ENCODE measurements at regions of chr12 and their contacts with region 1.

Region 1: GRCh38 chr12:108950991-108951739 is 69.7 kb downstream of the SVOP start:
- DNase-seq: peak; percentile 46
- ATAC-seq: peak; percentile 82
- H3K4me3 Mint-ChIP-seq: no peak overlapping the region
- H3K27ac Mint-ChIP-seq: no peak overlapping the region
- H3K4me1 Mint-ChIP-seq: peaks cover 7% of the 10 kb centered on the region
- H3K27me3 Mint-ChIP-seq: peaks cover 8% of the 10 kb centered on the region
- CTCF ChIP-seq: peak; percentile 97

Region 2: GRCh38 chr12:107992870-107993451 is 958.2 kb before region 1 on chr12:
- CTCF ChIA-PET with region 1: no interaction called
- POLR2A ChIA-PET with region 1: no interaction called
- intact Hi-C with region 1: loop called (anchors 2 kb)
- DNase-seq: no peak
- ATAC-seq: peak; percentile 31
- H3K4me3 Mint-ChIP-seq: no peak overlapping the region
- H3K27ac Mint-ChIP-seq: no peak overlapping the region
- H3K4me1 Mint-ChIP-seq: no peaks in the 10 kb centered on the region
- H3K27me3 Mint-ChIP-seq: peaks cover 29% of the 10 kb centered on the region
- CTCF ChIP-seq: no peak

Region 3: DNA sequence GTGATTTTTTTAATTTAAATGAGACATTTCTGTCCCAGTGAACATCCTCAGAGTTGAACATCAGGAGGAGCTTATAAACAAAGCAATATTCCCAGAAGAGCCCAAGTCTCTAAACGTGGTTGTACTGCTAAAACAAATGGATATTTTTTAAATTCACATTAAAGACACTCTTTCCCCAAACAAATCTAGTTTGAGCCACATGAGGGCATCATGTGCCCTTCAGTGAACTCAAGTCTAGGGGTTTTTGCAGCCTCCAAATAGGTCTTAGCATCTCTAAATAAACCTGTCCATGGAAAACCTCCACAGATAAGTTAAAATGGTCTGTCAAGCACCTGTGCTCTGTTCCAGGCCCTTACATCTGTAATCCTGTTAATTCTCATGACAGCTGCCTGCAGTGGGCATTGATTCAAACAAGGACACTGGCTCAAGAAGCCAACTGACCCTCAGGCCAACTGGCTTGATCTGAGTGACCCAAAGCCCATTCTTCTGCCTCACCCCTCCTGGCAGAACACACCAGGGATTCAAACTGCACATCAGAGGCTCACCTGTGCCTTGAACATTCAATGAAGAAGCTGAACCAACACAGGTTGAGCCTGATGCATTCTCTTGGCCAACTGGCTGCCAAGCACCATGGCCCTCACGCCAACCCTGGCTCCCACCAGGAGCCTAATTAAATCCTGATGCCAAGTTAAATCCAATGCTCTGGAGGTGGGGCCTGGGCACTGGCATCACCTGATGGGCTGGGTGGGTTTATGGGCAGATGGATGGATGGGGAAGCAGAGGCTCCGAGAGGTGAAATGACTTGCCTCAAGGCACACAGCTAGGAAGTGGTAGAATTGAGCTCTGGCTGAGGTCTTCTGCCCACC is 380.2 kb before region 1 on chr12:
- CTCF ChIA-PET with region 1: interaction called, 5 read pairs
- POLR2A ChIA-PET with region 1: interaction called, 6 read pairs
- intact Hi-C with region 1: loop called (anchors 1 kb)
- DNase-seq: no peak
- ATAC-seq: no peak
- H3K4me3 Mint-ChIP-seq: no peak overlapping the region
- H3K27ac Mint-ChIP-seq: peak overlapping the region; percentile 97
- H3K4me1 Mint-ChIP-seq: peaks cover 87% of the 10 kb centered on the region
- H3K27me3 Mint-ChIP-seq: no peaks in the 10 kb centered on the region
- CTCF ChIP-seq: no peak

Region 4: DNA sequence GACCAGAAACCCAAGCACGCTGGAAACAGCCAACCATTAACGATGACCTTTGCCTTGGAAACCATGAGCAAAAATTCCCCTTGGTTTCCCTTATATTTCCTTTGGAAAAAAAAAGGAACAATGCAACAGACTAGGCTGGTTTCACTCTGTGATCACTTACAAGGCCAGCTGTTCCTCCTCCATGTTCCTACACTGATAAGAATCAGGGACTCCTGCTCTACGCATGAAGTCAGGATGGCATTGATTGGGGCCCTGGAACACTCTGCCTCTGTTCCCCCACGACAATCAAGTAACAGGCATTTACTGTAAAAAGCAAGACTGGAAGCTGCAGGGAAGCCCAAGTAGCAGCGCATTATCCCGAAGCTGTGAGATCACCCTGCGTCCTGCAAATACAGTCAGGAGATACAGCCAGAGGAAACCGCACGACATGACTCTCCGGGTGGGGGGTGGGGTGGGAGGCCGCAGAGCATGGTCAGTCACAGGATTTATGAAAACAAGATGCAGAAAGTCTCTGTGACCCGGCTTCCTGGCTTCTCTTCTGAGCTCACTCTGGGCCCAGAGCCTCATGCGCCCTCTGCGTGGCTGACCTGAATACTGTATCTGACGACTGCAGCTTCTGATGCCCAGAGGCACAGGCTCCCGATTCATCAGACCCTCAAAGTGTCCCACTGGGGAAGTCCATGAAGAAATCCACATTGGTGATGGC is 124.9 kb before region 1 on chr12:
- CTCF ChIA-PET with region 1: interaction called, 4 read pairs
- POLR2A ChIA-PET with region 1: no interaction called
- intact Hi-C with region 1: loop called (anchors 1 kb)
- DNase-seq: no peak
- ATAC-seq: peak; percentile 66
- H3K4me3 Mint-ChIP-seq: peak overlapping the region; percentile 44
- H3K27ac Mint-ChIP-seq: peak overlapping the region; percentile 66
- H3K4me1 Mint-ChIP-seq: peaks cover 48% of the 10 kb centered on the region
- H3K27me3 Mint-ChIP-seq: no peaks in the 10 kb centered on the region
- CTCF ChIP-seq: no peak

Region 5: DNA sequence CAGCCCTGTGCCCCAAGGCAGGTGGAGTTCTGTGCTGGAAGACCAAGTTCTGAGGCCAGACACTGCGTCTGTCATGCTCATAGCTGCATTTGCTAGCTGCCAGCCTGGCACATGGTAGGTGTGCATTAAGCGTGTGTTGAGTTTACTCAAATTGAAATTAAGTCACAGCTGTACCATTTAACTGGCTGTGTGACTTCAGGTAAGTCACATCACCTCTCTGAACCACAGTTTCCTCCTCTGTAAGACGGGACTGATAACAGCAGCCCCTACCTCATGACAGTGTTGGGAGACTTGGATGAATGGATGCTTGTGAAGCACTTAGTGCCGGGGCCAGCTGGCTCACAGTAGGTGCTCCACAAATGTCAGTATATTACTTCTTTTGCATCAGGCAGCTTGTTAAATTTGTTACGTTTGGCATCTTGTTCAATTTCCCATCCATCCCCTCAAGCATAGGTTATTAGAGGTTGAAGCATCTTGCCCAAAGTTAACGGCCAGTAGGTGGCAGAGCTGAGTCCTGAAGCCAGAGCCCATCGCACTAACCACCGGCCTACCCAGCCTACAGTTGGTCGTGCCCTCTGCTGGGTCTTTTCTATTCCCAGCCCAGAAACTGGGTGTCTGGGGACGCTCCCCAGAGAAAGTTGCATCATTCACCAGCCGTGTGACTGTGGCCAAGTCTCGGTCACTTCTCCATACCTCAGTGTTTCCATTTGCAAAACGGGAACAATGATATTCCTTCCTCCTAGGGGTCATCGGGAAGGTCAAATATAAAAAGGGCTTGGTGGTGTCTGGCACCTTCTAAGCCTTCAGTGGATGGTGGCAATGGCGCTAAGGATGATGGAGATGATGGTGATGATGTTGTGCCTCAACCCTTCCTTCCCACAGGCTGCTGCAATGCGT is 66.8 kb before region 1 on chr12:
- CTCF ChIA-PET with region 1: interaction called, 75 read pairs
- POLR2A ChIA-PET with region 1: no interaction called
- intact Hi-C with region 1: loop called (anchors 1 kb)
- DNase-seq: peak; percentile 43
- ATAC-seq: peak; percentile 89
- H3K4me3 Mint-ChIP-seq: no peak overlapping the region
- H3K27ac Mint-ChIP-seq: no peak overlapping the region
- H3K4me1 Mint-ChIP-seq: no peaks in the 10 kb centered on the region
- H3K27me3 Mint-ChIP-seq: no peaks in the 10 kb centered on the region
- CTCF ChIP-seq: no peak

Region 6: DNA sequence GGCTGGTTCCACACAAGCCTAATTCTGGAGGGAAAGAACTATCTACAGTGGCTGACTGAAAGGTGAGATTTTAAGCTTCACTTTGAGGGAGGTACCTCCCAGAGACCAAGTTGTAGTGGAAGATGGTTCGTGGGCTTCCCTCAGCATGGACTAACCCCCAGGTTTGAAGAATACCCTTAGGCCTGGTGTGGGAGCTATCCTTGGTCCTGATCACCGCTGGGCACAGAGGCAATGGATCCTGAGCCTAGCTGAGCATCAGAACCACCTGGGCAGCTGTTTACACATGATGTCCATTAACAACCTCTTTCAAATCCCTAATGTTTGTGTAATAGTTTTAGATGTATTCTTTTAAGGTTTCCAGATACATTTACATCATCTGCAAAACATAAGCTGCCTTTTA is 61.0 kb before region 1 on chr12:
- CTCF ChIA-PET with region 1: interaction called, 75 read pairs
- POLR2A ChIA-PET with region 1: no interaction called
- intact Hi-C with region 1: no loop called
- DNase-seq: no peak
- ATAC-seq: no peak
- H3K4me3 Mint-ChIP-seq: no peak overlapping the region
- H3K27ac Mint-ChIP-seq: no peak overlapping the region
- H3K4me1 Mint-ChIP-seq: no peaks in the 10 kb centered on the region
- H3K27me3 Mint-ChIP-seq: no peaks in the 10 kb centered on the region
- CTCF ChIP-seq: no peak

Region 7: DNA sequence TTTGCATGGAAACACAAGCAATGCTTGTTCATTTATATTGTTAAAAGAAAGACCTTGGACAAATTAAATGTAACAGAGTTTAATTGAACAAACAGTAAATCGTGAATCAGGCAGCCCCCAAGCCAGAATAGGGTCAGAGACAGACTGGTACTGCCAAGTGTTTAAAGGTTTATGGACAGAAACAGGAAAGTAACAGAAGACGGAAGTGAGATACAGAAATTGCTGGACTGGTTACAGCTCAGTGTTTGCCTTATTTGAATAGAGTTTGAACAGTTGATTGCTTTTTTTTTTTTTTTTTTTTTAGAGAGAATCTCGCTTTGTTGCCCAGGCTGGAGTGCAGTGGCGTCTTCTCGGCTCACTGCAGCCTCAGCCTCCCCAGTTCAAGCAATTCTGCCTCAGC is 21.0 kb before region 1 on chr12:
- CTCF ChIA-PET with region 1: interaction called, 8 read pairs
- POLR2A ChIA-PET with region 1: no interaction called
- intact Hi-C with region 1: loop called (anchors 1 kb)
- DNase-seq: no peak
- ATAC-seq: peak; percentile 88
- H3K4me3 Mint-ChIP-seq: peak overlapping the region; percentile 33
- H3K27ac Mint-ChIP-seq: peak overlapping the region; percentile 43
- H3K4me1 Mint-ChIP-seq: peaks cover 20% of the 10 kb centered on the region
- H3K27me3 Mint-ChIP-seq: no peaks in the 10 kb centered on the region
- CTCF ChIP-seq: no peak

Region 8: DNA sequence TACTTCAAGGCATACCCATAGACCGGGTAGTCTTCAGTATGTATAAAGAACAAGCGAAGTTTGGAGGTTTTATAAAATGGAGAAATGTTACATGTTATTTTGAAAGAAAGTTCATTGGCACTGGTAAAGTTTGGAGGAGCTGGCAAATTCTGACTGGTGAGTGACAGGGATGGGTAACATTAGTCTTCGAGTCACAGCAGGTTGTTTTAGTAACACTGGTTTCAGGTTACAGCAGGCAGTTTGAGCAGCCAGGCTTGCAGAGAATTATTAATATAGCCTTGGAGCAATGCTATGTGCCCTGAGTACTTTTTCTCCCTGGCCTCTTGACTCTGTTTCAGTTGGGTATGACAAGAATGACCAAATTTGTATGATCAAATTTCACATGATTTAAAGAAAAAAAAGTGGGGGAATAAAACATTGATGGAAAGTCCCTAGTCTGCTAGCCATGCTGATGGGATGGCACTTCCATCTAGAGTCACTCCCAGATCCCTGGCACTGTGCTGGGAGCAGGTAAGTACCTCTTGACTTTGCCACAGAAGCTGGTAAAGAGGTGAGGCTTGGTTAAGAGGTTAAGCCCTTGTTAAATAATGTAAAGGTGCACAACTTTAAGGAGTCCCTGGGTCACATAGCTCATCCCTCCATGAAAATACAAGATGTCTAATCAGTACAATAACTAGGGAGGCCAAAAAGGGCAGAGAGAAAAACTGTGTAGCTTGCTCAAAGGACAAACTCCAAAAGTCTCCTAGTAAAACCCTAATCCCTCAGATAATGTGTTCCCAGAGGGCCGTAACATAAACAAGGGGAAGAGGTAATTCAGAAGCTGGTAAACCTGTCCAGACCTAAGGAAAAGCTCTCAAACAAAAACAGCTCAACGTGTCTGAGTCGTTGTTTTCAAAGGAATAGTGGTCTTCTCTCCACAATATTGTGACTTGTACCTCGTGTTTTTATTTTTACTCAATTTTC is 82.3 kb after region 1 on chr12:
- CTCF ChIA-PET with region 1: no interaction called
- POLR2A ChIA-PET with region 1: no interaction called
- intact Hi-C with region 1: no loop called
- DNase-seq: no peak
- ATAC-seq: no peak
- H3K4me3 Mint-ChIP-seq: no peak overlapping the region
- H3K27ac Mint-ChIP-seq: no peak overlapping the region
- H3K4me1 Mint-ChIP-seq: no peaks in the 10 kb centered on the region
- H3K27me3 Mint-ChIP-seq: peaks cover 17% of the 10 kb centered on the region
- CTCF ChIP-seq: no peak